Left colon (tissue), 2 donors: ENCODE measurements at regions of chr9 and their contacts with region 1.

Region 1: DNA sequence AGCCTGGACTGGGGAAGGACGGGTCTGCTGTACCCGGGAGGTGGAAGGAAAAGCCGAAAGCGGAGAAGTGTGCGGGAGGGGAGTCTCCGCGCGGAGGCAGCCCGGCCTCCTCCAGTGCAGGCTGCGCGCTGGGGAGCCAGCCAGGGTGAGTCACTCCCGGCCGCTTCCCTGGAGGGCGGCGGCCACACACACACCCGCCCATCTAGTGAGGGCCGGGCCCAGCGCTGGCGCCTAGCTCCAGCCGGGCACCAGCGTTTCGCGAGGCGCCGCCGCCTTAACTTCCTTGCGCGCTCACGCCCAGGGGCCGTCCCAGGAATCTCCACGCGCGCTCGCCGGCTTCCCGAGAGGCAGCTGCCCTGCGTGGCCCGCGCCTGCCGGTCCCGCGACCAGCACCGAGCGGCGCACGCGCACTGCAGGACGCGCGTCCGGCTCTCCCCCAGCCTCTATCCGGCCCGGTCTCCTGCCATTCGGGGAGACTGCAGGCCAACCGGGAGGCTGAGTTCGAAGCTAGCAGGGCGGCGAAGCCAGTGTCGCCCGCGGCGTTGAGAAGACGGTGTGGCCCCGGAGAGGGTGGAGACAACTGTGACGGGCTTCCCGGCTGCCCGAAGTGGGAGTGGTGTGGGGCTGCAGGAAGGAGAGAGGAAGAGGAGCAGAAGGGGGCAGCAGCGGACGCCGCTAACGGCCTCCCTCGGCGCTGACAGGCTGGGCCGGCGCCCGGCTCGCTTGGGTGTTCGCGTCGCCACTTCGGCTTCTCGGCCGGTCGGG is at the start of gene JAK2:
- DNase-seq: peak; percentile 91 to 94
- ATAC-seq: peak; percentile 87
- total RNA-seq, gene JAK2: 17.2 to 18.9 TPM

Region 2: GRCh38 chr9:4662108-4662988 is 322.5 kb before region 1 on chr9 and contains the start of gene PLPP6:
- intact Hi-C with region 1: loop called in 1 of 2 experiments (anchors 10 kb)
- DNase-seq: peak; percentile 90 to 92
- ATAC-seq: peak; percentile 91
- total RNA-seq, gene PLPP6: 15.9 to 22.3 TPM

Region 3: GRCh38 chr9:4762108-4762885 is 222.5 kb before region 1 on chr9:
- intact Hi-C with region 1: loop called in 1 of 2 experiments (anchors 5 kb)
- DNase-seq: peak; percentile 76 to 91
- ATAC-seq: peak; percentile 85

Region 4: DNA sequence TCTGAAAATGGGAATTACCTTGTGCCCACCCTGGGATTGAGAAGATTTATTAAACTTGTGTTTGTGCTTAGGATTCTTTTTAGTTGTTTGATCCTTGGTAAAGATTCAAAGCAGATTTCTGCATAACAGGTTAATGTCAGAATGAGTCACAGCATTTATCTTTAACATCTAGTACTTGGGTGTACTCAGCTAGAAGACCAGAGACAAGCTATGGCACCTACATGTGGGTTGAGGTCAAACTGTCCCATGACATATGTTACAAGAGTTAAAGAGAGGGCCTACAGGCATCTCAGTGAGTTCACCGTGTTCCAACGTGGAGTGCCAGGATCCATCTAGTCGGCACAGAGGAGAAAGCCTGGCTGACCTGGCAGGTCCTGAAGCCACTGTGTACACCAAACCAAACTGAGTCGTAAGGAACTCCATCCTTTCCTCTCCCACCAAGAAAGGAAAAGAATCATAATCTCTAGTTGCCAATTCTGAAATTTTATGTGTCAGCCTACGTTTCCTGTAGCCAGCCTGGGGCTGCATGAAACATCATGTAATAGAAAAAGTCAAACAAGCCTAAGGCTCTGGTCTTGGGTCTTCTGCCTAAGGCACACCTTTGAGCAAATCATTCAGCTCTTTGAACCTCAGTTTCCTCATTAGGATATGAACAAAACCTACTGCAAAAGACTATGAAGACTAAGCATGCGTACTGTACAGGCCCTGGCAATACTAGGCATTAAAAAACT is 118.4 kb before region 1 on chr9:
- intact Hi-C with region 1: no loop called
- DNase-seq: no peak
- ATAC-seq: no peak